HepG2 (cell line): ENCODE measurements at regions of chr6 and their contacts with region 1.

Region 1: GRCh38 chr6:137351890-137352289 is 132.7 kb upstream of the IFNGR1 start:
- DNase-seq: peak; percentile 86
- ATAC-seq: no peak
- H3K4me3 ChIP-seq: no peak overlapping the region
- H3K27ac ChIP-seq: peak overlapping the region; percentile 99
- H3K4me1 ChIP-seq: peaks cover 82% of the 10 kb centered on the region
- H3K27me3 ChIP-seq: no peaks in the 10 kb centered on the region
- CTCF ChIP-seq: no peak
- EP300 ChIP-seq: peak in 1 of 2 experiments; percentile 76; a peak in 2 of 4 replicates
- POLR2A ChIP-seq: no peak
- RAD21 ChIP-seq: no peak

Region 2: DNA sequence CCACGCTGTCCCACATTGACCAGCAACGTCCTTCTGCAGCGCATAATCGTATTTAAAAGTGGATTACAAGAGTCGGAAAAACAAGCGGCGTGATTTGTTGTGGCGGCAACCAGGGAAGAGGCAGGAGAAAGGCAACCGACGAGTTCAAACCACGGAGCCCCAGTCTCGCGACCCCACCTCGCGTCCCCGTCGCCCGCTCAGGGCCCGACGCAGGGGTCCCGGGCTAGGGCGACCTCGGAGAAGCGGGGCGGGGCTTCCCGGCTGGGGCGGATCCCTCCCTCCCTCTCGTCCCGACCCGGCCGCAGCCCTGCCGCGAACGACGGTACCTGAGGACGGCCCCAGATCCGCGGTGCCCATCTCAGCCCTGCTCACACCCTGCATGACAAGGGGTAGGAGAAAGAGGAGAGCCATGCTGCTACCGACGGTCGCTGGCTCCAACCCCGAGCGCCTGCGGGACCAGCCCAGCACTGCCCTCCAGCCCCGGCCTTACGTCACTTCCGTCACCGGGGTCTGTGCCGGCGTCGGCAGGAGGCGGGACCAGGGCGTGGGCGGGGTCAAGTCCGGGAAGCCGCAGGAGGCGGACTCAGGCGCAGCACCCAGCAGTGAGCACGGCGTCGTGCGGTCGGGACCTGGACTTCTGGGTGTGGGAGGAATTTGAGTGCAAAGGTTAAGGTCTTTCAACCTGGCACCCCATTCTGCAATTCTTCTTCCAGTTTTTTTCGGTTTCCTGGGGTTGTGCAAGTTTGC is 132.8 kb before region 1 on chr6 and contains the start of gene IFNGR1:
- CTCF ChIA-PET with region 1: no interaction called
- POLR2A ChIA-PET with region 1: interaction called, 4 read pairs
- in situ Hi-C with region 1: no loop called
- intact Hi-C with region 1: loop called (anchors 2 kb)
- DNase-seq: peak; percentile 98
- ATAC-seq: peak; percentile 93
- H3K4me3 ChIP-seq: peak within 1 kb of the TSS; percentile 87 to 93 (median 89)
- H3K27ac ChIP-seq: peak within 1 kb of the TSS; percentile 88
- H3K4me1 ChIP-seq: peaks cover 57% of the 10 kb centered on the region
- H3K27me3 ChIP-seq: peaks cover 0 to 4% of the 10 kb centered on the region in 2 experiments; a peak in 1 of 5 replicates
- CTCF ChIP-seq: no peak; the same call in 1 of the 2 replicates
- EP300 ChIP-seq: peak in 1 of 2 experiments; percentile 81; a peak in 3 of 4 replicates
- POLR2A ChIP-seq: peak; percentile 93 to 97
- RAD21 ChIP-seq: peak; percentile 55
- total RNA-seq, gene IFNGR1: 48.9 and 82.8 TPM in 2 replicates

Region 3: GRCh38 chr6:137271245-137272183 is 80.4 kb before region 1 on chr6:
- CTCF ChIA-PET with region 1: no interaction called
- POLR2A ChIA-PET with region 1: no interaction called
- in situ Hi-C with region 1: no loop called
- intact Hi-C with region 1: loop called (anchors 5 kb)
- DNase-seq: peak; percentile 75
- ATAC-seq: peak; percentile 85
- H3K4me3 ChIP-seq: no peak overlapping the region
- H3K27ac ChIP-seq: no peak overlapping the region
- H3K4me1 ChIP-seq: no peaks in the 10 kb centered on the region
- H3K27me3 ChIP-seq: no peaks in the 10 kb centered on the region
- CTCF ChIP-seq: peak; percentile 88
- EP300 ChIP-seq: no peak
- POLR2A ChIP-seq: no peak
- RAD21 ChIP-seq: peak; percentile 94

Region 4: DNA sequence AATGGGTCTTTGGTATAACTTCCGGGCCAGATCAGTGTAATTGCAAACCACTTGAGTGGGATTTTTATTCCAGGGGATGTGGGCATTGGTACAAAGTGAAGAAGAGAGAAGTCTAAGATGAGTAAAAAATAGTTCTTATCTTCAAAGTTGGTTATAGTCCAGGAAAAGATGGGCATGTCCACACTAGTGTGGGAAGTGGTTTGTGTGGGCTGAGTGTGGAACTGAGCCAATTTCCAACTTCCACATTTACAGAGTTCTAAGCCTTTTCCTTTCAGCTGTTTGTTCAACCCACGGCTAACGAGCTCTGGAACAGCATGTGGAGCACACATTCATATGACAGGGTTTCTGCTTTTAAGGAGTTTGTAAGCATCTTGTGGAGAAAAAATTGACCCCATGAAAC is 60.4 kb before region 1 on chr6:
- CTCF ChIA-PET with region 1: no interaction called
- POLR2A ChIA-PET with region 1: no interaction called
- in situ Hi-C with region 1: no loop called
- intact Hi-C with region 1: no loop called
- DNase-seq: no peak
- ATAC-seq: no peak
- H3K4me3 ChIP-seq: no peak overlapping the region
- H3K27ac ChIP-seq: no peak overlapping the region
- H3K4me1 ChIP-seq: no peaks in the 10 kb centered on the region
- H3K27me3 ChIP-seq: peaks cover 0 to 21% of the 10 kb centered on the region in 2 experiments; a peak in 2 of 5 replicates
- CTCF ChIP-seq: no peak
- EP300 ChIP-seq: no peak
- POLR2A ChIP-seq: no peak
- RAD21 ChIP-seq: no peak

Region 5: GRCh38 chr6:137589067-137589848 is 237.4 kb after region 1 on chr6:
- CTCF ChIA-PET with region 1: no interaction called
- POLR2A ChIA-PET with region 1: no interaction called
- in situ Hi-C with region 1: no loop called
- intact Hi-C with region 1: loop called (anchors 5 kb)
- DNase-seq: peak; percentile 92
- ATAC-seq: peak; percentile 100
- H3K4me3 ChIP-seq: no peak overlapping the region; a peak in 1 of 6 replicates
- H3K27ac ChIP-seq: no peak overlapping the region
- H3K4me1 ChIP-seq: peaks cover 16% of the 10 kb centered on the region
- H3K27me3 ChIP-seq: no peaks in the 10 kb centered on the region
- CTCF ChIP-seq: peak; percentile 91
- EP300 ChIP-seq: peak in 1 of 2 experiments; percentile 36; a peak in 2 of 4 replicates
- POLR2A ChIP-seq: no peak
- RAD21 ChIP-seq: peak; percentile 84

Region 6: DNA sequence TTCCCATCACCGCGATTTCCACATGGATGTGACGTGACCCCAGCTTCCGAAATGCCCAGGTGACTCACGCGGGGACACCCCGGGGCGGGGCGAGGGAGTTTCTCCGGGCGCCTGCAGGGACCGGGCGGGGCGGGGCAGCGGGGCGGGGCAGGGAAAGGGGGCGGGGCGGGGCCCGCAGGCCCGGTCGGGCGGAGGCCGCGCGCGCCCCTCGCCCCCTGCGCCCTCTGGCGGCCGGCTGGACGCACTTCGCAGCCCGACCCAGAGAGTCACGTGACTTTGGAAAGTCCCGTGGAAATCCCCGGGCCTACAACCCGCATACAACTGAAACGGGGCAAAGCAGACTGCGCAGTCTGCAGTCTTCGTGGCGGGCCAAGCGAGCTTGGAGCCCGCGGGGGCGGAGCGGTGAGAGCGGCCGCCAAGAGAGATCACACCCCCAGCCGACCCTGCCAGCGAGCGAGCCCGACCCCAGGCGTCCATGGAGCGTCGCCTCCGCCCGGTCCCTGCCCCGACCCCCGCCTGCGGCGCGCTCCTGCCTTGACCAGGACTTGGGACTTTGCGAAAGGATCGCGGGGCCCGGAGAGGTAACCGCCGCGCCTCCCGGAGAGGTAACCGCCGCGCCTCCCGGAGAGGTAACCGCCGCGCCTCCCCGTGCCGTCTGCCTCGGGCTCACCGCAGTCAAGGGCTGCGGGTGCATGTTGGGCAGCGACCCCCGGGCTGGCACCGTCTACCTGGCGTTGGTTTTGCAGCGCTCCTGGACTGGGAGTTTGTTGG is 515.2 kb after region 1 on chr6 and contains the start of gene TNFAIP3:
- CTCF ChIA-PET with region 1: no interaction called
- POLR2A ChIA-PET with region 1: no interaction called
- in situ Hi-C with region 1: loop called (anchors 10 kb)
- intact Hi-C with region 1: no loop called
- DNase-seq: peak; percentile 94
- ATAC-seq: peak; percentile 85
- H3K4me3 ChIP-seq: peak within 1 kb of the TSS; percentile 75 to 100 (median 92)
- H3K27ac ChIP-seq: peak within 1 kb of the TSS; percentile 92
- H3K4me1 ChIP-seq: peaks cover 75% of the 10 kb centered on the region
- H3K27me3 ChIP-seq: no peaks in the 10 kb centered on the region; a peak in 1 of 5 replicates
- CTCF ChIP-seq: peak; percentile 85
- EP300 ChIP-seq: peak in 1 of 2 experiments; percentile 71; a peak in 2 of 4 replicates
- POLR2A ChIP-seq: peak; percentile 88 to 95
- RAD21 ChIP-seq: peak; percentile 99
- total RNA-seq, gene TNFAIP3: 24.7 and 28.2 TPM in 2 replicates